ENCODE measurements at regions of chr7 and their contacts with region 1.

Region 1: GRCh38 chr7:80967071-80967916 is 48.4 kb upstream of the SEMA3C start:
- DNase-seq: no peak
- ATAC-seq: no peak
- H3K4me3 Mint-ChIP-seq: no peak overlapping the region
- H3K27ac Mint-ChIP-seq: no peak overlapping the region
- H3K4me1 Mint-ChIP-seq: peaks cover 7% of the 10 kb centered on the region
- H3K27me3 Mint-ChIP-seq: no peaks in the 10 kb centered on the region
- CTCF ChIP-seq: no peak

Region 2: DNA sequence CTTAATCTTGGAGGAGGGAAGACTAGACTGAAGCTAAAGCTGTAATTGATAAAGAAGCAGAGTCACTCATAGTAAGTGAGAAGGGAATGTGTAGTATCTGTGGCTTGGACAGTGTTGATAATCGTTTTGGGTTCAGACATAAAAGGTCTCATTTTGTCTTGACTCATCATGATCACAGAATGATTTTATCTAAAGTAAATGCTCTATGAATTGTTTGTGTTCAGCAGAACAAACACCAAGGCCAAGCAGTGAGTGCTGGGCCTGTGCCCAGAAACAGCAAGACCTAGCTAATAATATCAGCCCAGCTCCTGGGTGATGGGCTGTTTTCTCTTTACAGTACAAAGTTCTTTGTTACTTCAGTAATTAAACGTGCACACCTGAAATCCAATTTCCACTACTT is 355.5 kb before region 1 on chr7:
- CTCF ChIA-PET with region 1: no interaction called
- POLR2A ChIA-PET with region 1: no interaction called
- DNase-seq: no peak
- ATAC-seq: no peak
- H3K4me3 Mint-ChIP-seq: no peak overlapping the region
- H3K27ac Mint-ChIP-seq: no peak overlapping the region
- H3K4me1 Mint-ChIP-seq: peaks cover 21% of the 10 kb centered on the region
- H3K27me3 Mint-ChIP-seq: no peaks in the 10 kb centered on the region
- CTCF ChIP-seq: no peak

Region 3: DNA sequence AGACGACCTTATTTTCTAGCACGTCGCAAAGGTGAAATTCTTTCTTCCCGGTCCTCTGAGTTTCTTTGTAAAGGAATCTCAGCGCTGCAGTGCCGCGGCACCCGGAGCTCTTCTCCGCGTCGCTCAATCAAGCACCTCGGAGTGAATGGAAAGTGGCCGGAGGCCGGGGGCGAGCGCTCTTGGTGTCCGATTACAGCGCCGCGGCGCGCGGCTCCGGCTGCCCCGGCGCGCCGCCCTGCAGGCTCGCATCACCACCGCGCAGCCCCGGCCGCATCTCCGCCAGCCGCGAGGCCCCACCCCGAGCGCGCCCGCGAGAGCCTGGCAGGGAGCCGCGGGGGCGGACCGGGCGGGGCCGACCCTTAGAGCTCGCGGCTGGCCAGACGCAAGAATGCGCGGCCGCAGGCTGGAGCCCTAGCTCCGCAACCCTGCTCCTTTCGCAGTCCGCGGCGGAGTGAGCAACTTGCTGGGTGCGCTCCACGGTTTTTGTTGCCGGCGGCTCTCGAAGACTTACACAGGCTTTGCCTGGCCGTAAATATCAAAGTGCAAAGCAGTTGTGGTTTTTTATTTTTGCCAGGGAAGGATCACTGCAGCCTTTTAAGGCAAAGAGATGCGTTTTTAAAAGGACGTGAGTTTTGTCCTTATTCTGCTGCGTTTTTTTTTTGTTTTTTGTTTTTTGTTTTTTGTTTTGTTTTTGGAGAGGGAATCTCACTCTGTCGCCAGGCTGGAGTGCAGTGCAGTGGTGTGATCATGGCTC is 48.2 kb before region 1 on chr7 and contains the start of gene SEMA3C:
- CTCF ChIA-PET with region 1: interaction called, 4 read pairs
- POLR2A ChIA-PET with region 1: interaction called, 12 read pairs
- DNase-seq: peak; percentile 89
- ATAC-seq: peak; percentile 98
- H3K4me3 Mint-ChIP-seq: peak within 1 kb of the TSS; percentile 85
- H3K27ac Mint-ChIP-seq: peak within 1 kb of the TSS; percentile 93
- H3K4me1 Mint-ChIP-seq: peaks cover 46% of the 10 kb centered on the region
- H3K27me3 Mint-ChIP-seq: peaks cover 11% of the 10 kb centered on the region
- CTCF ChIP-seq: no peak
- total RNA-seq, gene SEMA3C: 1.6 to 3.1 TPM (median 2.1 TPM) in 3 replicates